Ascending aorta (tissue), 2 donors: ENCODE measurements at regions of chr2 and their contacts with region 1.

Region 1: GRCh38 chr2:96907115-96908041 is 37.5 kb upstream of the SEMA4C start:
- DNase-seq: peak; percentile 77 to 97
- H3K4me3 ChIP-seq: peak overlapping the region; percentile 40 to 56
- H3K27ac ChIP-seq: peak overlapping the region; percentile 95 to 98
- H3K4me1 ChIP-seq: peaks cover 7 to 38% of the 10 kb centered on the region in 2 donors
- H3K27me3 ChIP-seq: no peaks in the 10 kb centered on the region
- CTCF ChIP-seq: peak in 1 of 3 experiments; percentile 21

Region 2: GRCh38 chr2:96514521-96514920 is 392.9 kb before region 1 on chr2:
- intact Hi-C with region 1: no loop called
- DNase-seq: peak in 1 of 2 donors; percentile 33
- H3K4me3 ChIP-seq: no peak overlapping the region
- H3K27ac ChIP-seq: no peak overlapping the region
- H3K4me1 ChIP-seq: no peaks in the 10 kb centered on the region
- H3K27me3 ChIP-seq: no peaks in the 10 kb centered on the region
- CTCF ChIP-seq: no peak

Region 3: DNA sequence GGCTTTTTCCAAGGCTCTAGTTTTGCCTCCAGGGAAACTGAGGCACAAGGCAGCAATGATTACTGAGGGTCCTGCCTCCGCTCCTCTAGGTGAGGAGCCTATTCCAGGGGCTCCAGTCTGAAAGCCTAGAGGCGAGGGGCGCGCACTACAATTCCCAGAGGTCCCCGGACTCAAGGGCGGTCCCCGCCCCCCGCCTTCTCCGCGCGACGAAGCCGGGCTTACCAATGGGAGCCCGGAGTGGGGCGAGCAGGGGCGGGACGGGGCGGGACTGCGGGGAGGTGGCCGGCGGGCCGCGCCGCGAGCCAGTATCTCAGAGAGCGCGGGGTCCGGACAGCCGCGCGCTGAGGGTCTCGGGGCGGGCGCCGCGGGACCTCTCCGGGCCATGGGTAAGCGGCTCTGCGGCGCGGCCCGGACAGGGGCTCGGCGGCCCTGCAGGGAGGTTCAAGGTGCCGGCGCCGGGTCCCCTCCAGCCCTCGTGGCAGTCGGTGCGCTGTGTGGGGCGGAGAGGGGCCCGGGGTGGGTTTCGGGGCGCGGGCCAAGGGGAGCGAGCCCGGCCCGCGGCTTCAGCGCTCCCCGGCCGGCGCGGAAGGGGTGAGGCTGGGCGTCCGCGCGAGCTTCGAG is 370.8 kb before region 1 on chr2 and contains the start of gene ARID5A:
- intact Hi-C with region 1: loop called (anchors 5 kb)
- DNase-seq: peak; percentile 87 to 98
- H3K4me3 ChIP-seq: peak within 1 kb of the TSS; percentile 83 to 99
- H3K27ac ChIP-seq: peak within 1 kb of the TSS; percentile 96 to 99
- H3K4me1 ChIP-seq: peaks cover 28 to 66% of the 10 kb centered on the region in 2 donors
- H3K27me3 ChIP-seq: no peaks in the 10 kb centered on the region
- CTCF ChIP-seq: peak; percentile 40 to 47 (median 46)
- total RNA-seq, gene ARID5A: 267 TPM

Region 4: GRCh38 chr2:96856776-96857673 is 50.4 kb before region 1 on chr2:
- intact Hi-C with region 1: loop called (anchors 1 kb)
- DNase-seq: no peak
- H3K4me3 ChIP-seq: peak overlapping the region; percentile 63 to 84
- H3K27ac ChIP-seq: peak overlapping the region; percentile 61 to 79
- H3K4me1 ChIP-seq: peaks cover 3 to 22% of the 10 kb centered on the region in 2 donors
- H3K27me3 ChIP-seq: no peaks in the 10 kb centered on the region
- CTCF ChIP-seq: no peak

Region 5: GRCh38 chr2:96887412-96888012 is 19.9 kb before region 1 on chr2:
- intact Hi-C with region 1: loop called (anchors 2 kb)
- DNase-seq: no peak
- H3K4me3 ChIP-seq: peak overlapping the region in 1 of 2 donors; percentile 36
- H3K27ac ChIP-seq: peak overlapping the region; percentile 72 to 78
- H3K4me1 ChIP-seq: peaks cover 25 to 47% of the 10 kb centered on the region in 2 donors
- H3K27me3 ChIP-seq: no peaks in the 10 kb centered on the region
- CTCF ChIP-seq: no peak

Region 6: DNA sequence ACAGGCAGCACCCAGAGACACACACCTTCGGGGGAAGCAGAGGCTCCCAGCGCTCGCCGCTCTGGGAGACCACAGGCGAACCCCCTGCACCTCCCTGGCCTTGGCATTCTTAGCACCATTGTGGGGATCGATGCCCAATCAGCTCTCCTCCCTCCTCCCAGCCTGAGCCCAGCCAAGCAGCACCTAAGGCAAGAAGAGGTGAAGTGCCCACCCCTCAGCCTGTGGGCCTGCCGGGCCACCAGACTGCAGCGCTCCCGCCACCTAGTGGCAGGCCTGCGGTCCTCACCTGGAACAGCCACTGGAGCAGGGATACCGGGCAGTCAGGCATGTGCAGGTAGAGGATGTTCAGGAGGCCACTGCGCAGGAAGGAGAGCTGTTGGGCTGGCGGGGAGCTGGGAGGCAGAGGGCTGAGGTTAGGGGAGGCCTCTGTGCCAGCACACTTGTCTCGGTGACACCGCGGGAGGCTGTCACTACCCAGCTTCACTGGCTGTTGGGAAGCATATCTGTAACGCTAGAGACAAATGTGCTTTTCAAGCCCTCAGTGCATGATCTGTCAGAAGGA is 43.8 kb after region 1 on chr2:
- intact Hi-C with region 1: loop called (anchors 2 kb)
- DNase-seq: peak in 1 of 2 donors; percentile 84
- H3K4me3 ChIP-seq: no peak overlapping the region
- H3K27ac ChIP-seq: no peak overlapping the region
- H3K4me1 ChIP-seq: peaks cover 4 to 18% of the 10 kb centered on the region in 2 donors
- H3K27me3 ChIP-seq: no peaks in the 10 kb centered on the region
- CTCF ChIP-seq: peak; percentile 91 to 97 (median 96)